Activated B cell treated with CpG ODN at 0.5 μM for 24 hours (primary cell): ENCODE measurements at regions of chr6 and their contacts with region 1.

Region 1: GRCh38 chr6:142946181-142946923 is 1.4 kb upstream of the HIVEP2 start:
- DNase-seq: peak; percentile 75
- ATAC-seq: peak; percentile 38
- H3K4me3 Mint-ChIP-seq: peak overlapping the region; percentile 93
- H3K27ac Mint-ChIP-seq: peak overlapping the region; percentile 96
- H3K4me1 Mint-ChIP-seq: peaks cover 41% of the 10 kb centered on the region
- H3K27me3 Mint-ChIP-seq: no peaks in the 10 kb centered on the region
- CTCF ChIP-seq: no peak

Region 2: GRCh38 chr6:141483598-141484061 is 1462.7 kb before region 1 on chr6:
- CTCF ChIA-PET with region 1: no interaction called
- POLR2A ChIA-PET with region 1: no interaction called
- intact Hi-C with region 1: loop called (anchors 2 kb)
- DNase-seq: no peak
- ATAC-seq: peak; percentile 79
- H3K4me3 Mint-ChIP-seq: peak overlapping the region; percentile 78
- H3K27ac Mint-ChIP-seq: peak overlapping the region; percentile 96
- H3K4me1 Mint-ChIP-seq: peaks cover 52% of the 10 kb centered on the region
- H3K27me3 Mint-ChIP-seq: no peaks in the 10 kb centered on the region
- CTCF ChIP-seq: no peak

Region 3: DNA sequence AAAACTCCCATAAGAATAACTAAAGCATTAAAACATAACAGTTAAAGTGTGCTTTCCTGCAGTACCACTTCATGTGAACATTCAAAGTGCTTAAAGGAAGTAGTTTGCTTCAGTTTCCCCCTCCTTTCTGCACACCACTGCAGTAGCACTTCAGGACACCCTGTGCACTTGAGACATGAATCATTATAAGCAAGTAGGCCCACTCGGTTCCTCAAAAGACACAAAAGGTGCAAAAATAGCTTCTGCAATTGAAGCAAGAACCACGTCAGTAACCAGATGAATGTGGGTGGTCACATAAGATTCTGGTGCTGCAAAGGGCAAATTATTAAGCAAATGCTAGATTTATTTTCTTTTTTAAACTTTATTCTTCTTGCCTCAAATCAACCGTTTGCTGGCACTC is 162.0 kb before region 1 on chr6:
- CTCF ChIA-PET with region 1: no interaction called
- POLR2A ChIA-PET with region 1: no interaction called
- intact Hi-C with region 1: loop called (anchors 1 kb)
- DNase-seq: no peak
- ATAC-seq: peak; percentile 98
- H3K4me3 Mint-ChIP-seq: peak overlapping the region; percentile 15
- H3K27ac Mint-ChIP-seq: peak overlapping the region; percentile 78
- H3K4me1 Mint-ChIP-seq: peaks cover 34% of the 10 kb centered on the region
- H3K27me3 Mint-ChIP-seq: no peaks in the 10 kb centered on the region
- CTCF ChIP-seq: no peak

Region 4: DNA sequence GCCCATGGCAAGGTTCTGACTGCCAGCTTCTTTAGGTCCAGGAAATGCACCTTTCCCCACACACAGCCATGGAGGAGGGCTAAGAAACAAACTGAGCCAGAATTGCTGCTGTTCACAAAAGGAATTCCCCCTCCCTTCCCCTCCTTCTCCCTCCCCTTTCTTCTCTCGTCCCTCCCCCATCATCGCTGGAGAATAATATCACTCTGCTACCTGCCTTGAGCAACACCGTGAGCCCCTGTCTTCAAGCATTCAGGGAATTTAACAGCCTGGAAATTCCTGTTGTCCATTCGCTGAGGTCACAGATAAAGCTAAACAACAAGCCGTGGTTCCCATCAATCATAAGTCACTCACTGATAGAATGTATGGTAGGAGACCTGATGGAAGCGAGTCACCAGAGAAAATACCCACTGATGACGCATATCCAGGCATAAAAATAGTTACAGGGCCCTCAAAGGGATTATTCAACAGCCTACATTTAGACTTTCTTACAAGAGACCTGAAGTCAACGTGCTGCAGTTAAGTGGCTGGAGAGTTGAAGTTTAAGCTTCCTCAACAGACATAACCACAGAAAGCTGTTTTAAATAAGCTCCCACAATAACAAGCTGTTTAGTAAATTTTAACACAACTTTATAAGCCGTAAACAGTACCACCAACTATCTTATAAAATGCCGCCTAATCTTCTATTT is 61.0 kb before region 1 on chr6:
- CTCF ChIA-PET with region 1: interaction called, 6 read pairs
- POLR2A ChIA-PET with region 1: interaction called, 56 read pairs
- intact Hi-C with region 1: loop called (anchors 1 kb)
- DNase-seq: peak; percentile 28
- ATAC-seq: peak; percentile 83
- H3K4me3 Mint-ChIP-seq: peak overlapping the region; percentile 98
- H3K27ac Mint-ChIP-seq: peak overlapping the region; percentile 99
- H3K4me1 Mint-ChIP-seq: peaks cover 86% of the 10 kb centered on the region
- H3K27me3 Mint-ChIP-seq: no peaks in the 10 kb centered on the region
- CTCF ChIP-seq: no peak

Region 5: GRCh38 chr6:143026696-143027449 is 80.5 kb after region 1 on chr6:
- CTCF ChIA-PET with region 1: interaction called, 3 read pairs
- POLR2A ChIA-PET with region 1: interaction called, 9 read pairs
- intact Hi-C with region 1: loop called (anchors 2 kb)
- DNase-seq: peak; percentile 26
- ATAC-seq: peak; percentile 68
- H3K4me3 Mint-ChIP-seq: no peak overlapping the region
- H3K27ac Mint-ChIP-seq: no peak overlapping the region
- H3K4me1 Mint-ChIP-seq: peaks cover 5% of the 10 kb centered on the region
- H3K27me3 Mint-ChIP-seq: no peaks in the 10 kb centered on the region
- CTCF ChIP-seq: no peak

Region 6: GRCh38 chr6:143569040-143569439 is 622.7 kb after region 1 on chr6:
- CTCF ChIA-PET with region 1: no interaction called
- POLR2A ChIA-PET with region 1: no interaction called
- intact Hi-C with region 1: loop called (anchors 10 kb)
- DNase-seq: no peak
- ATAC-seq: no peak
- H3K4me3 Mint-ChIP-seq: no peak overlapping the region
- H3K27ac Mint-ChIP-seq: no peak overlapping the region
- H3K4me1 Mint-ChIP-seq: peaks cover 14% of the 10 kb centered on the region
- H3K27me3 Mint-ChIP-seq: no peaks in the 10 kb centered on the region
- CTCF ChIP-seq: no peak

Region 7: GRCh38 chr6:144334131-144334708 is 1387.9 kb after region 1 on chr6:
- CTCF ChIA-PET with region 1: no interaction called
- POLR2A ChIA-PET with region 1: no interaction called
- intact Hi-C with region 1: loop called (anchors 5 kb)
- DNase-seq: peak; percentile 52
- ATAC-seq: peak; percentile 76
- H3K4me3 Mint-ChIP-seq: peak overlapping the region; percentile 78
- H3K27ac Mint-ChIP-seq: peak overlapping the region; percentile 88
- H3K4me1 Mint-ChIP-seq: peaks cover 71% of the 10 kb centered on the region
- H3K27me3 Mint-ChIP-seq: no peaks in the 10 kb centered on the region
- CTCF ChIP-seq: no peak